B cell (primary cell): ENCODE measurements at regions of chr17 and their contacts with region 1.

Region 1: DNA sequence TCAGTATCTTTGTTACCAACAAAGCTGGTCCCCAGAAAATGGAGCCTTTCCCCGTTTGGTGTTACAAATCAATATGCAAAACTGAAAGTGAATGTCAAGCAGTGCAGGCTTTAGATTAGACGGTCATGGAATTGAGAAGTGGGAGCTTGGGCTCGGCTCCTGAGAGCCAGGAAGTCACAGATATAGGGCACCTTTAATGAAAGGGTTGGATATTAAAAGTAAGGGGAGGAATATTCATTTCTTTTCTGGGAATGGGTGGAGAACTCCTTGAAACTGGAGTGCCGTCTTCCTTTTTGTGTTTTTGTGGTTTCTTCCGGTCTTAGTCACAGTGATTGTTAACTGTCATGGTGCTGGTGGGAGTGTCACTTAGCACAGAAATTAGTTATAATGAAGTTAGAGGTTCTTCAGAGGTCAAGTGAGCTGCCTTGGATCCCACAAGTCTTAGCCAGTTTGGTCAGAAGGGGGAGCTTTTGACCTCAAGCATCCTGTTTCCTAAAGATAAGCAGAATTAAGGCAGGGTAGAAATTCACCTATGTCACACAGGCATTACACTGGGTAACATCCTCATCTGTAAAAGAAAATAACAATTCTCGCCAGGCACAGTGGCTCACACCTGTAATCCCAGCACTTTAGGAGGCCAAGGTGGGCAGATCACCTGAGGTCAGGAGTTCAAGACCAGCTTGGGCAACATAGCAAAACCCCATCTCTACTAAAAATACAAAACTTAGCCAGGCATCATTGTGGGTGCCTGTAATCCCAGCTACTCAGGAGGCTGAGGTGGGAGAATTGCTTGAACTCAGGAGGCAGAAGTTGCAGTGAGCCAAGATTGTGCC is 9.6 kb upstream of the EIF1 start:
- DNase-seq: peak; percentile 65
- ATAC-seq: peak; percentile 50
- H3K4me3 ChIP-seq: peak overlapping the region; percentile 17 to 51 (median 46)
- H3K4me3 Mint-ChIP-seq: peak overlapping the region; percentile 82
- H3K27ac ChIP-seq: peak overlapping the region; percentile 62 to 66
- H3K27ac Mint-ChIP-seq: peak overlapping the region; percentile 87
- H3K4me1 ChIP-seq: peaks cover 46 to 50% of the 10 kb centered on the region in 2 donors
- H3K4me1 Mint-ChIP-seq: peaks cover 37% of the 10 kb centered on the region
- H3K27me3 ChIP-seq: no peaks in the 10 kb centered on the region
- H3K27me3 Mint-ChIP-seq: no peaks in the 10 kb centered on the region
- CTCF ChIP-seq: no peak

Region 2: DNA sequence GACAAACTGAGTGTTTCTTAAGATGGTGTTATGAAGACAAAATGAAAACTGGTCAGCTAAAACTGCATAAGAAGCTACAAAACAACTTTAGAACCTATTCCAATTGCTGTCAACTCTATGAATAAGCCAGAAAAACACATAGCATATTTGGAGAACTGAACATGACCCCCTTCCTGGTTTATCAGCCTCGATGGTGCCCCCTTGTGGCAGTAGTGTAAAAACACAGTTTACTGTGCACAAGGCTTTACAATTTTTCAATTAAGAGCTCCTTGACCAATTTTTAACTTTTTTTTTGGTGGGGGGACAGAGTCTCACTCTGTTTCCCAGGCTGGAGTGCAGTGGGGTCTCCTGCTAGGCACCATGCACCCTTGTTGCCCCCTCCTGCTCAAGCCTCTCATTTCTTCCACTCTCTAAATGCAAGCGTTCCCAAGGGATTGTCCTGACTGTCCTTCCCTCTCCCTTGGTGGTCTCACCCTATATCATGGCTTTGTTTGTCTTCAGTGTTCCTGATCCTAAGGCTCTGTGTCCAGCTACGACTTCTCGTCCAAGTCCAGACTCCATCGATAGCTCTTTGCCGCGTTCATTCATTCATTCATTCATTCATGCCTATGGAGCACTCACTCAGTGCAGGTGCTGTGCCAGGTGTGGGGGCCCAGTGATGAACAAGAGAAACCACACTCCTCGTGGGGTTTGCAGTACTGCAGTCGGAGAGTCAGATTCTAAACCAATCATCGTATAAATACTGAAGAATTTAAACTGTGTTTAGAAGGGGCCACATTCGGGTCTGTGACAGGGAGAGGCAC is 17.0 kb after region 1 on chr17:
- CTCF ChIA-PET with region 1: interaction called, 212 read pairs
- POLR2A ChIA-PET with region 1: interaction called, 122 read pairs
- intact Hi-C with region 1: no loop called
- DNase-seq: peak; percentile 82
- ATAC-seq: peak; percentile 72
- H3K4me3 ChIP-seq: no peak overlapping the region
- H3K4me3 Mint-ChIP-seq: no peak overlapping the region
- H3K27ac ChIP-seq: no peak overlapping the region
- H3K27ac Mint-ChIP-seq: peak overlapping the region; percentile 42
- H3K4me1 ChIP-seq: peaks cover under 1 to 7% of the 10 kb centered on the region in 2 donors
- H3K4me1 Mint-ChIP-seq: peaks cover 29% of the 10 kb centered on the region
- H3K27me3 ChIP-seq: no peaks in the 10 kb centered on the region
- H3K27me3 Mint-ChIP-seq: peaks cover 2% of the 10 kb centered on the region
- CTCF ChIP-seq: peak; percentile 82